ENCODE measurements at regions of chr5 and their contacts with region 1.

Region 1: GRCh38 chr5:142826741-142827732 is 56.9 kb downstream of the ARHGAP26 start:
- DNase-seq: peak in 2 of 3 donors; percentile 50 to 69
- ATAC-seq: peak in 1 of 2 donors; percentile 40
- H3K4me3 ChIP-seq: no peak overlapping the region
- H3K27ac ChIP-seq: peak overlapping the region; percentile 72
- H3K4me1 ChIP-seq: peaks cover 33% of the 10 kb centered on the region
- H3K27me3 ChIP-seq: no peaks in the 10 kb centered on the region

Region 2: GRCh38 chr5:142785211-142785610 is 41.8 kb before region 1 on chr5:
- intact Hi-C with region 1: loop called in 1 of 4 experiments (anchors 5 kb)
- DNase-seq: no peak
- ATAC-seq: peak in 1 of 2 donors; percentile 29
- H3K4me3 ChIP-seq: no peak overlapping the region
- H3K27ac ChIP-seq: peak overlapping the region; percentile 14
- H3K4me1 ChIP-seq: peaks cover 25% of the 10 kb centered on the region
- H3K27me3 ChIP-seq: no peaks in the 10 kb centered on the region

Region 3: DNA sequence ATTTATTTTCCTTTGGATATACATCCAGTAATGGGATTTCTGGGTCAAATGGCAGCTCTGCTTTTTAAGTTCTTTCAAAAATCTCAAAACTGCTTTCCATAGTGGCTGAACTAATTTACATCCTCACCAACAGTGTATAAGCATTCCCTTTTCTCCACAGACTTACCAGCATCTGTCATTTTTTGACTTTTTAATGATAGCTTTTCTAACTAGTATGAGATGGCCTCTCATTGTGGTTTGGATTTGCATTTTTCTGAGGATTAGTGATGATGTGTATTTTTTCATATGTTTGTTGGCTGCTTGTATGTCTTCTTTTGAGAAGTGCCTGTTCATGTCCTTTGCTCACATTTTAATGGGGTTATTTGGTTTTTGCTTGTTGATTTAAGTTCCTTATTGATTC is 894.9 kb after region 1 on chr5:
- intact Hi-C with region 1: no loop called
- DNase-seq: no peak
- ATAC-seq: no peak
- H3K4me3 ChIP-seq: no peak overlapping the region
- H3K27ac ChIP-seq: no peak overlapping the region
- H3K4me1 ChIP-seq: no peaks in the 10 kb centered on the region
- H3K27me3 ChIP-seq: no peaks in the 10 kb centered on the region